ENCODE measurements at regions of chr2 and their contacts with region 1.

Region 1: GRCh38 chr2:197804049-197804757 is at the start of gene PLCL1:
- DNase-seq: peak; percentile 96
- H3K4me3 Mint-ChIP-seq: peak within 1 kb of the TSS; percentile 94
- H3K27ac Mint-ChIP-seq: peak within 1 kb of the TSS; percentile 75
- H3K4me1 Mint-ChIP-seq: peaks cover 43% of the 10 kb centered on the region
- H3K27me3 Mint-ChIP-seq: no peaks in the 10 kb centered on the region
- total RNA-seq, gene PLCL1: 3.3 to 3.5 TPM

Region 2: GRCh38 chr2:197786010-197786877 is 18.0 kb before region 1 on chr2:
- CTCF ChIA-PET with region 1: interaction called, 5 read pairs
- intact Hi-C with region 1: loop called (anchors 1 kb)
- DNase-seq: peak; percentile 70
- H3K4me3 Mint-ChIP-seq: peak overlapping the region; percentile 67
- H3K27ac Mint-ChIP-seq: no peak overlapping the region
- H3K4me1 Mint-ChIP-seq: peaks cover 2% of the 10 kb centered on the region
- H3K27me3 Mint-ChIP-seq: peaks cover 9% of the 10 kb centered on the region

Region 3: DNA sequence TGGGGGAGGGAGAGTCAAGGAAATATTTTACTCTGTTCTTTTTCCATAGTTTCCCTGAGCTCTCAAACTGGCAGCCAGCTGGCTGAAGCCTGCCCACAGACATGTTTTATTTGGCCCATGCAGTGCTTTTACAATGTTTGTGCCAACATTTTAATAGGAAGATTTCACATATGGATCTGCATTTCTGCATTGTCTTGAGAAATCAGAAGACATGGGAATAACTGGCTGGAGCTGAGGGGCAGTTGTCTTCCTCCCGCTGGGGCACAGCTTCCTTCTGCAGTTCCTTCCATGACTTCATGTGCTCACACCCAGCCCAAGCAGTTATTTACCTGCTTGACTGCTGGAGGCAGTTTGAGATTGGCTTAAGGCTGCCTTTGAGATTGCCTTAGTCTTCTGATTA is 74.6 kb after region 1 on chr2:
- CTCF ChIA-PET with region 1: no interaction called
- intact Hi-C with region 1: loop called (anchors 1 kb)
- DNase-seq: no peak
- H3K4me3 Mint-ChIP-seq: no peak overlapping the region
- H3K27ac Mint-ChIP-seq: no peak overlapping the region
- H3K4me1 Mint-ChIP-seq: peaks cover 55% of the 10 kb centered on the region
- H3K27me3 Mint-ChIP-seq: no peaks in the 10 kb centered on the region

Region 4: DNA sequence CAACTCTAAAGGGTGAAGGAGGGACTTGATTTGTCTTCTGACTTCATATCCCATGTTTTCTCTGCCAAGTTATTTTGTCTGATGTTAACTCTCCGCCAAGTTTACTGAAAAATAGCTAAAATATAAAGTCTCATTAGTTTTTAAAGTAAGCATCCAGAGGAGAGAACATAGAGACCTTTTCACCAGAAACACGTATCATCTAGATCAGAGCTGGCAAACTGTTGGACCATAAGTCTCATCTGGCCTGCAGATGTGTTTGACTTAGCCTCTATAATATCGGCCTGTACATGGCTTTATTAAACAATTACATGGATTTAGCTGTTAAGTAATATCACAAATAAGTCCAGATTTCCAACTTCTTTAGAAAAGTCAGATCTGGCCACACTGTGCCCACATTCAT is 182.8 kb after region 1 on chr2:
- CTCF ChIA-PET with region 1: interaction called, 6 read pairs
- intact Hi-C with region 1: loop called (anchors 1 kb)
- DNase-seq: no peak
- H3K4me3 Mint-ChIP-seq: no peak overlapping the region
- H3K27ac Mint-ChIP-seq: no peak overlapping the region
- H3K4me1 Mint-ChIP-seq: peaks cover 35% of the 10 kb centered on the region
- H3K27me3 Mint-ChIP-seq: no peaks in the 10 kb centered on the region

Region 5: GRCh38 chr2:198127627-198128026 is 323.4 kb after region 1 on chr2:
- CTCF ChIA-PET with region 1: interaction called, 23 read pairs
- intact Hi-C with region 1: loop called (anchors 1 kb)
- DNase-seq: peak; percentile 68
- H3K4me3 Mint-ChIP-seq: no peak overlapping the region
- H3K27ac Mint-ChIP-seq: no peak overlapping the region
- H3K4me1 Mint-ChIP-seq: no peaks in the 10 kb centered on the region
- H3K27me3 Mint-ChIP-seq: no peaks in the 10 kb centered on the region

Region 6: DNA sequence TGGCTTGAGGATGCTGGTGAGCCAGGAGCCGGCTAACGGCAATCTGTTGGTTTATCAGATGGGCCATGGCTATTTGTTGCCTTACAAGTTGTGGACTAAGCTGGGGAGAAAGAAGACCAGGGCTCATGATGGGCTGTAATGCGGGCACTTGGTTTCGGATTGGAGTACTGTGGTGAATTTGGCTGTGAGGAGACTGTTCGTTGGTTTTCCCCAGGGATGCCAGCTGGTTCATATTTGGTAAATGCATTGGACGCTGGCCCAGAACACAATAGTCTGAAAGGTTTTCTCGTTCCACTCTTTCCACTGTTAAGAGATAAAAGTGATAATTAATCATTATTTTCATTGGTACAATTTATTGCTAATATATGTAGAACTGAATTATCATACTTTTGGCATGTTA is 1544.7 kb after region 1 on chr2:
- CTCF ChIA-PET with region 1: no interaction called
- intact Hi-C with region 1: no loop called
- DNase-seq: no peak
- H3K4me3 Mint-ChIP-seq: no peak overlapping the region
- H3K27ac Mint-ChIP-seq: no peak overlapping the region
- H3K4me1 Mint-ChIP-seq: no peaks in the 10 kb centered on the region
- H3K27me3 Mint-ChIP-seq: peaks cover 2% of the 10 kb centered on the region

Measured in activated naive CD4-positive, alpha-beta T cell treated with anti-CD3 and anti-CD28 coated beads for 36 hours (primary cell).